GM12878 (cell line): ENCODE measurements at regions of chr3 and their contacts with region 1.

Region 1: DNA sequence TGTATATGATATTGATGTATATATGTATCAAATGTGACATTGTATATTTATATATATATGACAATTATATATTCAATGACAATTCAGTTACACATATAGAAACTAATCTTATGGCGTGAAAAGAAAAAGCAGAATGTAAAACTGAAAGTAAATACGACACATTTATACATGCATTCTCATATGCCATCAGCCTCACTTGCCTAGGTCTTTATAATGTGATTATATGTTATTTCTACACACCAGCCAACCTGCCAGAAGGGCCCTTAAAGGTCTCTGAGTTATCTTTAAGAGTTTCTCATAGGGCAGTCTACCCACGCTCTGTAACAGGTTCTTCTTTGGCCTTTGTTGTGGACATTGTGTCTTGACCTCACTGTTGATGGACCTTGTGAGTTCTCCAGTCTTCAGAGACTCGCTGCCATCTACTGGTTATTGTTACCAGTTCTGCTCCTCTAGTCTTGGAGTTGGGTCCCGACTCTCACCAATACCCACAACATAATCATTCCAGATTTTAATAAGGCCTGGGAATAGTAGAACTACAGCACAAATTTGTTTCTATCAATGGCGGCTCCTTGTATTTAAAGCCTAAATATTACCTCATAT is 371.5 kb upstream of the GOLIM4 start:
- DNase-seq: peak; percentile 21
- ATAC-seq: peak; percentile 92
- H3K4me3 ChIP-seq: no peak overlapping the region
- H3K27ac ChIP-seq: peak overlapping the region; percentile 39; the same call in 1 of the 2 replicates
- H3K4me1 ChIP-seq: no peaks in the 10 kb centered on the region
- H3K27me3 ChIP-seq: no peaks in the 10 kb centered on the region
- CTCF ChIP-seq: peak; percentile 28 to 43 (median 28); a peak in 4 of 6 replicates
- EP300 ChIP-seq: no peak
- POLR2A ChIP-seq: no peak
- RAD21 ChIP-seq: peak; percentile 66

Region 2: GRCh38 chr3:168249550-168250414 is 217.4 kb before region 1 on chr3:
- CTCF ChIA-PET with region 1: no interaction called
- POLR2A ChIA-PET with region 1: no interaction called
- RAD21 ChIA-PET with region 1: no interaction called
- SMC1A ChIA-PET with region 1: no interaction called
- in situ Hi-C with region 1: no loop called
- intact Hi-C with region 1: loop called (anchors 1 kb)
- DNase-seq: no peak
- ATAC-seq: peak; percentile 85
- H3K4me3 ChIP-seq: peak overlapping the region; percentile 78
- H3K27ac ChIP-seq: peak overlapping the region; percentile 59
- H3K4me1 ChIP-seq: peaks cover 12% of the 10 kb centered on the region; the same call in 1 of the 2 replicates
- H3K27me3 ChIP-seq: no peaks in the 10 kb centered on the region
- CTCF ChIP-seq: peak; percentile 36 to 60 (median 51)
- EP300 ChIP-seq: no peak
- POLR2A ChIP-seq: peak; percentile 82
- RAD21 ChIP-seq: no peak; the same call in 1 of the 2 replicates

Region 3: DNA sequence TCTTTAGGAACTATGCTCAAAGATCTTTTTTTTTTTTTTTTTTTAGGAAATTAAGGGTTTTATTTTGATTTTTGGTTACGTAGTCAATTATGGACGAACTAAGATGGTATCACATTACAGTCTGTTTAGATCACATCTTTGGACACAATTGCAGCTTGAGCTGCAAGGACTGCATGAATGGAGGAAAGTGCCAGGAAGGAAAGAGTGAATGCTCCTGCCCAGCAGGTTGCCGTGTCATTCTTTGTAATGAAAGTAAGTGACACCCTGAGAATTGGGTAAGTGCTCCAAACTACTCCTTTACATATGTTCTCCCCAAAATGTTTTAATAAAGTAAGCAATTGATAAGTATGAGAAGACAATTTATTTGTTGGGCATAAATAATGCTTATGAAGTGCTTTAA is 345.0 kb after region 1 on chr3:
- CTCF ChIA-PET with region 1: no interaction called
- POLR2A ChIA-PET with region 1: no interaction called
- RAD21 ChIA-PET with region 1: no interaction called
- SMC1A ChIA-PET with region 1: no interaction called
- in situ Hi-C with region 1: no loop called
- intact Hi-C with region 1: no loop called
- DNase-seq: no peak
- ATAC-seq: no peak
- H3K4me3 ChIP-seq: no peak overlapping the region
- H3K27ac ChIP-seq: no peak overlapping the region
- H3K4me1 ChIP-seq: no peaks in the 10 kb centered on the region
- H3K27me3 ChIP-seq: no peaks in the 10 kb centered on the region
- CTCF ChIP-seq: no peak
- EP300 ChIP-seq: no peak
- POLR2A ChIP-seq: no peak
- RAD21 ChIP-seq: no peak